ENCODE measurements at regions of chr2 and their contacts with region 1.

Region 1: GRCh38 chr2:54634564-54635511 is 88.6 kb upstream of the EML6 start:
- DNase-seq: peak; percentile 22
- H3K4me3 ChIP-seq: peak overlapping the region in 1 of 4 donors; percentile 4
- H3K27ac ChIP-seq: peak overlapping the region; percentile 47 to 78 (median 64)
- H3K4me1 ChIP-seq: peaks cover 11 to 46% (median 18%) of the 10 kb centered on the region in 4 donors
- H3K27me3 ChIP-seq: no peaks in the 10 kb centered on the region
- CTCF ChIP-seq: no peak
- EP300 ChIP-seq: no peak
- POLR2A ChIP-seq: no peak

Region 2: DNA sequence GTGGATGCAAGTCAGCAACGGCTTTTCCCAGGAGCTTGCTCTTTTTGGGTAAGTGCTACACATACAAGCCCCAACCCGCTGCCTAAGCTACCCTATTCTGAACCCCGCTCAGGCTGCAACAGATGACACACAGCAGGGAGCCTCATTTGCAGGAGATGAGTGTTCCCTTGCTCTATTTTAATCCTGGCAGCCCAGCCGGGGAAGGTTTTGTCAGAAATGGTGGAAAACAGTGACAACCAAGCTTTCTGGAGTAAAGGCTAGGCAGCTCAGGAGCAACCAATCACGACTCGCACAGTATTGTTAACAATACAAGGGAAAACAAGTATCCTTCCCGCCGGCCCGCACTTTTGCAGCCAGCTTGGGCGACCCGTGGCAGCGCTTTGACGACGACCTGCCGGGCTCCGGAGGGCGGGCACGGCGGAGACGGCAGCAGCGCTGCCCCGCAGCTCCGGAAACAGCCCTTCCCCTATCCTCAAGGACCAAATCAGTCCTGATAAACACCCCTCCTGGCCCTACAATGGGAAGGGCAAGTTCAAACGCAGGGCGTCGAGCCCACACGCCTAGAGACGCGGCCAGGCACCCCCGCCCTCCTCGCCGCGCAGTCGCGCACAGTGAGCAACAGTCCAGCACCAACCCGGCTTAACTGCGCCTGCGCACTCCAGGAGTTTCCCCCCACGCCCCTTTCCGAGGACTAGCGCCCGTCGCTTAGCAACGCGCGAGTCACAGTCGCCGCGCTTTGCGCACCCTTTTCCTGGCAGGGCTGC is 304.5 kb before region 1 on chr2:
- in situ Hi-C with region 1: no loop called
- intact Hi-C with region 1: loop called (anchors 10 kb)
- DNase-seq: peak; percentile 96
- H3K4me3 ChIP-seq: peak overlapping the region; percentile 30 to 56 (median 44)
- H3K27ac ChIP-seq: peak overlapping the region; percentile 78 to 89 (median 84)
- H3K4me1 ChIP-seq: peaks cover 3 to 13% (median 9%) of the 10 kb centered on the region in 4 donors
- H3K27me3 ChIP-seq: no peaks in the 10 kb centered on the region
- CTCF ChIP-seq: no peak
- EP300 ChIP-seq: no peak
- POLR2A ChIP-seq: peak; percentile 78

Region 3: DNA sequence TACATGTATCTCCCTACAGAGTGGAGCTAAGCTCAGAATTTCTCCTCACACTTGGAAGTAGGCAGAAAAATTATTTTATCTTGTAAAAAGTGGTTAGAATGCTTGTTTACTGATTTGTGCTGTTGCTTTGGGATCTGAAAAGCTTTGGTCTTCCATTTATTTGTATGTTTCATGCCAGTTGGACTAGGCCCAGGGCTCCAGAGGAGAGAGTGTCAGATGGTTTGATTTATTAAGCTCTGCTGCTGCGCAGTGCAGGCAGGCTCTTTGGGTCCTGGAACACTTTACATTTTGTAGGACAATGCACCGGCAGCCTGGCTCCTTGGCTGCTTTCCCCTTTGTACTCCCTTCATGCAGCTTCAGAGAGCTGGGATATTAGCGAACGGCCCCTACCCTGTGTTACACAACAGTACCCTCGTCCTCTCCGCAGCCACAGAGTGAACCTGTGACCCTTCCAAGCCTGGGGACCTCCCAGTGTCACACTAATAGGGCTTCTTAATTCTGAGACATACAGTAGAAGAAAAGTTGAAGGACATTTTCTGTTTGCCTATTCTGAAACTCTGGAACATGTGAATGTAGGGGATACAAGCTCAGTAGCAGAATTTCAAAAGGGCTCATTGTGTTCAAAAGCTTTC is 31.9 kb after region 1 on chr2:
- in situ Hi-C with region 1: no loop called
- intact Hi-C with region 1: loop called (anchors 1 kb)
- DNase-seq: no peak
- H3K4me3 ChIP-seq: no peak overlapping the region
- H3K27ac ChIP-seq: peak overlapping the region; percentile 69 to 87 (median 77)
- H3K4me1 ChIP-seq: peaks cover 30 to 43% (median 36%) of the 10 kb centered on the region in 4 donors
- H3K27me3 ChIP-seq: no peaks in the 10 kb centered on the region
- CTCF ChIP-seq: no peak
- EP300 ChIP-seq: no peak
- POLR2A ChIP-seq: no peak

Region 4: GRCh38 chr2:54677476-54678265 is 42.8 kb after region 1 on chr2:
- in situ Hi-C with region 1: no loop called
- intact Hi-C with region 1: no loop called
- DNase-seq: no peak
- H3K4me3 ChIP-seq: no peak overlapping the region
- H3K27ac ChIP-seq: no peak overlapping the region
- H3K4me1 ChIP-seq: peaks cover 5 to 19% (median 15%) of the 10 kb centered on the region in 4 donors
- H3K27me3 ChIP-seq: no peaks in the 10 kb centered on the region
- CTCF ChIP-seq: no peak
- EP300 ChIP-seq: no peak
- POLR2A ChIP-seq: no peak

Region 5: GRCh38 chr2:54720569-54720968 is 85.7 kb after region 1 on chr2:
- in situ Hi-C with region 1: no loop called
- intact Hi-C with region 1: no loop called
- DNase-seq: no peak
- H3K4me3 ChIP-seq: no peak overlapping the region
- H3K27ac ChIP-seq: no peak overlapping the region
- H3K4me1 ChIP-seq: peaks cover 0 to 19% (median 14%) of the 10 kb centered on the region in 4 donors
- H3K27me3 ChIP-seq: peaks cover 17% of the 10 kb centered on the region
- CTCF ChIP-seq: no peak
- EP300 ChIP-seq: no peak
- POLR2A ChIP-seq: no peak

Measured in transverse colon (tissue), 4 donors.